Activated T-helper 1 cell treated with anti-CD3 and anti-CD28 coated beads, Interleukin-12 subunit alpha, Interleukin-12 subunit beta, Interleukin-2, Interleukin-4 antibody, amounts not matched to agents 30 ng/mL and 10 ng/mL and 1 ng/mL, durations not matched to agents 14 hours and 24 hours and 36 hours (primary cell): ENCODE measurements at regions of chr13 and their contacts with region 1.

Region 1: DNA sequence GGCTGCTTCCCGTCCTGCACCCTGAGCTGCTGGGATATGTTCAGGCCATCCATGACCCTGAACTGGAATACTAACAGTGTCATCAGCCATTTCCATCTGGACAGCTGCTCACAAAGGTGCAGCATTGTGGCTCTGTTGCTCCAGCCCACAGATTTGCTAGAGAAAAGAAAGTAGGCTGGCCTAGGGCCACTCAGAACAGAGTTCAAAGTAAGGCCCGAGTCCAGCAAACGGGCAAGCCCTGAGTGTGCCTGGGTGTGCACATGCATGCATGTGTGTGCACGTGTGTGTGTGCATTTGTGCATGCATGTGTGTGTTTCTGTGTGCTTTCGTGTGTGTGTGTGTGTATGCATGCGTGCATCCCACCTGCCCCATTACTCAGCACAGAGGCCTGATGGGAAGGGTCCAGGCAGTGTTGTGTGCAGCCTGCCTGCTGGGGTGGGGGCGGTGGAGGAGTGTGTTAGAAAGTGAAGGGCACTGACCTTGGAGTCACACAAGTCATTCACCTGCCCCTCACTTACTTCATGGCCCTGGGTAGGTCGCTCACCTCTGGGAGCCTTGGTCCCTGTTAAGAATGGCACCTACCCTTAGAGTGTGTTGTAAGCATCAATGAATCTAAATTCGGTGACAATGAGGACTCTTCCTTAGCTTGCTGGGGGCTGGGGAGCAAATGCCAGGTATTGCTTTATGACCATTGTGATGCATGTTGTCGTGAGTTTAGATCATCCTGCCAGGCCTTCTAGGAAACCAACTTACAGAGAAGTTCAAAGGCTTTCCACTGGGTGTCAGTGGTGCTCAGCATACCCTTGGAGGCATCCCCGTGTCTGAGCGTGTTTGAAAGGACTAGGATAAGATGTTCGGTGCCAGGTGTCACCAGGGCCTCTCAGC is 53.2 kb downstream of the GPR12 start:
- DNase-seq: peak; percentile 5
- H3K4me3 Mint-ChIP-seq: no peak overlapping the region
- H3K27ac Mint-ChIP-seq: no peak overlapping the region
- H3K4me1 Mint-ChIP-seq: no peaks in the 10 kb centered on the region
- H3K27me3 Mint-ChIP-seq: peaks cover 10% of the 10 kb centered on the region

Region 2: GRCh38 chr13:26872525-26873385 is 165.4 kb after region 1 on chr13:
- intact Hi-C with region 1: loop called (anchors 1 kb)
- DNase-seq: peak; percentile 22
- H3K4me3 Mint-ChIP-seq: no peak overlapping the region
- H3K27ac Mint-ChIP-seq: no peak overlapping the region
- H3K4me1 Mint-ChIP-seq: no peaks in the 10 kb centered on the region
- H3K27me3 Mint-ChIP-seq: no peaks in the 10 kb centered on the region

Region 3: GRCh38 chr13:26929971-26930730 is 222.8 kb after region 1 on chr13:
- intact Hi-C with region 1: loop called (anchors 1 kb)
- DNase-seq: peak; percentile 44
- H3K4me3 Mint-ChIP-seq: no peak overlapping the region
- H3K27ac Mint-ChIP-seq: no peak overlapping the region
- H3K4me1 Mint-ChIP-seq: no peaks in the 10 kb centered on the region
- H3K27me3 Mint-ChIP-seq: peaks cover 10% of the 10 kb centered on the region

Region 4: GRCh38 chr13:27496536-27497273 is 789.3 kb after region 1 on chr13:
- intact Hi-C with region 1: no loop called
- DNase-seq: no peak
- H3K4me3 Mint-ChIP-seq: no peak overlapping the region
- H3K27ac Mint-ChIP-seq: no peak overlapping the region
- H3K4me1 Mint-ChIP-seq: no peaks in the 10 kb centered on the region
- H3K27me3 Mint-ChIP-seq: peaks cover 3% of the 10 kb centered on the region